CD4-positive, alpha-beta memory T cell (primary cell): ENCODE measurements at regions of chr3 and their contacts with region 1.

Region 1: GRCh38 chr3:178084938-178085816 is 451.1 kb upstream of the KCNMB2 start:
- DNase-seq: peak; percentile 38 to 57 (median 48)
- H3K4me3 ChIP-seq: no peak overlapping the region
- H3K4me3 Mint-ChIP-seq: peak overlapping the region; percentile 24 to 75 (median 40)
- H3K27ac ChIP-seq: no peak overlapping the region
- H3K27ac Mint-ChIP-seq: peak overlapping the region; percentile 1 to 88 (median 71)
- H3K4me1 ChIP-seq: peaks cover 24% of the 10 kb centered on the region
- H3K4me1 Mint-ChIP-seq: peaks cover 24 to 32% (median 29%) of the 10 kb centered on the region in 4 donors
- H3K27me3 ChIP-seq: no peaks in the 10 kb centered on the region
- H3K27me3 Mint-ChIP-seq: peaks cover 0 to 3% of the 10 kb centered on the region in 2 donors

Region 2: GRCh38 chr3:178001670-178002101 is 83.5 kb before region 1 on chr3:
- CTCF ChIA-PET with region 1: no interaction called
- POLR2A ChIA-PET with region 1: no interaction called
- intact Hi-C with region 1: loop called (anchors 10 kb)
- DNase-seq: peak in 3 of 5 donors; percentile 7 to 19 (median 11)
- H3K4me3 ChIP-seq: no peak overlapping the region
- H3K4me3 Mint-ChIP-seq: peak overlapping the region in 7 of 8 donors; percentile 21 to 79 (median 64)
- H3K27ac ChIP-seq: peak overlapping the region; percentile 5
- H3K27ac Mint-ChIP-seq: peak overlapping the region; percentile 15 to 93 (median 80)
- H3K4me1 ChIP-seq: peaks cover 48% of the 10 kb centered on the region
- H3K4me1 Mint-ChIP-seq: peaks cover 35 to 55% (median 46%) of the 10 kb centered on the region in 4 donors
- H3K27me3 ChIP-seq: no peaks in the 10 kb centered on the region
- H3K27me3 Mint-ChIP-seq: no peaks in the 10 kb centered on the region

Region 3: DNA sequence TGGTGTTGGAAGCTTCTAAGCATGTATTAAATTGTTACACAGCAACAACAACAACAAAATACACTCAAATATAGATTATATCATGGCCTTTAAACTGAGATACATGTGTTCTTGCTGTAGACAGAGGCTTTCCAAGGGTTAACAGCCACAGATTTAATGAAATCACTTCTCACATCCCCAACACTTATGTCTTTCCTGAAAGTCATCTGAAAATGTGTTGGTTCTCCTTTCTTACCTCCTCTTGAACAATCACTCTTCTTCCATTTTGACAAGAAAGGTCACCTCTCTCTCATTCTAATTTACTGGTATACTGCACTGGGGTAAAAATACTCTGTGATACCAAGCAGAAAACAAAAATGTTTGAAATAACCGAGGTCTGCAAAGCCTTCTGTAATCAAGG is 56.2 kb before region 1 on chr3:
- CTCF ChIA-PET with region 1: no interaction called
- POLR2A ChIA-PET with region 1: no interaction called
- intact Hi-C with region 1: no loop called
- DNase-seq: no peak
- H3K4me3 ChIP-seq: no peak overlapping the region
- H3K4me3 Mint-ChIP-seq: no peak overlapping the region
- H3K27ac ChIP-seq: no peak overlapping the region
- H3K27ac Mint-ChIP-seq: peak overlapping the region in 1 of 7 donors; percentile 13
- H3K4me1 ChIP-seq: no peaks in the 10 kb centered on the region
- H3K4me1 Mint-ChIP-seq: no peaks in the 10 kb centered on the region
- H3K27me3 ChIP-seq: no peaks in the 10 kb centered on the region
- H3K27me3 Mint-ChIP-seq: no peaks in the 10 kb centered on the region

Region 4: GRCh38 chr3:178155521-178155920 is 70.3 kb after region 1 on chr3:
- CTCF ChIA-PET with region 1: no interaction called
- POLR2A ChIA-PET with region 1: no interaction called
- intact Hi-C with region 1: no loop called
- DNase-seq: no peak
- H3K4me3 ChIP-seq: no peak overlapping the region
- H3K4me3 Mint-ChIP-seq: no peak overlapping the region
- H3K27ac ChIP-seq: no peak overlapping the region
- H3K27ac Mint-ChIP-seq: no peak overlapping the region
- H3K4me1 ChIP-seq: no peaks in the 10 kb centered on the region
- H3K4me1 Mint-ChIP-seq: peaks cover 0 to 4% (median 0%) of the 10 kb centered on the region in 4 donors
- H3K27me3 ChIP-seq: no peaks in the 10 kb centered on the region
- H3K27me3 Mint-ChIP-seq: peaks cover 1 to 2% of the 10 kb centered on the region in 2 donors

Region 5: DNA sequence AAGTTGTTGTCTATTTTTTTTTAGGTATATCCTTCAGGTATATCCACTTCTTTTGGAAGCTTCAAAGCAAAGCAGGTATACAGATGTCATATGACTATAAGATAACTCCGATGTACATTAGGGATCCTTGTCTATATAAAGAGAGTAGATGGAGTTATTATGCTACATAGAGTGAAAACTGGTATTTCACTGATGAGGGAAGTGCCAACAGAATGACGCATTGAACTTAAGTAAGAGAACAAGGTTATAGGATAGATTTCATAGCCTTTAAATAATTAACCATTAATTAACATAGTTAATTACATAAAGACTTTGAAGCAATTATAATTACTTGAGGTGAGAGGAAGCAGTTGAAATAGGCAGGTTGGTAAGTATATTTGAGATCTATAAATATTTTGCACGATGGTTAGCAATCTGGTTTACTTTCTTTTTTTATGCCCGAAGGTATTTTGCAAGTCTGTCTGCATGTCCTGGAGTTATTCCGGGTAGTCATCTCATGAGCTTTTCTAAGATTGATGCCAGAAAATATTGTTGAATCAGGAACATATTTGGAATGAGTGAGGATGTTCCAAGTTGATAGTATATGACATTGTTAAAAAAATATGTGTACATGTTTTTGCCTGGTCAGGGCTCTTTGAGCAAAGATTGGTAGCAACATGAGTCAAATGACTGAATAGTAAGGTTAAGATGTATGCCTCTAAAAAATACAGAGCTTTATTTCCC is 151.5 kb after region 1 on chr3:
- CTCF ChIA-PET with region 1: no interaction called
- POLR2A ChIA-PET with region 1: no interaction called
- intact Hi-C with region 1: no loop called
- DNase-seq: no peak
- H3K4me3 ChIP-seq: no peak overlapping the region
- H3K4me3 Mint-ChIP-seq: no peak overlapping the region
- H3K27ac ChIP-seq: no peak overlapping the region
- H3K27ac Mint-ChIP-seq: no peak overlapping the region
- H3K4me1 ChIP-seq: no peaks in the 10 kb centered on the region
- H3K4me1 Mint-ChIP-seq: no peaks in the 10 kb centered on the region
- H3K27me3 ChIP-seq: no peaks in the 10 kb centered on the region
- H3K27me3 Mint-ChIP-seq: peaks cover 0 to 4% of the 10 kb centered on the region in 2 donors